Transverse colon (tissue), 4 donors: ENCODE measurements at regions of chr1 and their contacts with region 1.

Region 1: GRCh38 chr1:17551755-17552234 is 12.3 kb downstream of the ARHGEF10L start:
- DNase-seq: no peak
- H3K4me3 ChIP-seq: no peak overlapping the region
- H3K27ac ChIP-seq: peak overlapping the region; percentile 49 to 64 (median 58)
- H3K4me1 ChIP-seq: peaks cover 16 to 32% (median 26%) of the 10 kb centered on the region in 4 donors
- H3K27me3 ChIP-seq: no peaks in the 10 kb centered on the region
- CTCF ChIP-seq: no peak
- EP300 ChIP-seq: no peak
- POLR2A ChIP-seq: no peak

Region 2: GRCh38 chr1:17465228-17465627 is 86.6 kb before region 1 on chr1:
- in situ Hi-C with region 1: no loop called
- intact Hi-C with region 1: no loop called
- DNase-seq: no peak
- H3K4me3 ChIP-seq: no peak overlapping the region
- H3K27ac ChIP-seq: no peak overlapping the region
- H3K4me1 ChIP-seq: no peaks in the 10 kb centered on the region
- H3K27me3 ChIP-seq: peaks cover 22% of the 10 kb centered on the region
- CTCF ChIP-seq: no peak
- EP300 ChIP-seq: no peak
- POLR2A ChIP-seq: no peak

Region 3: GRCh38 chr1:17520071-17520813 is 31.6 kb before region 1 on chr1:
- in situ Hi-C with region 1: no loop called
- intact Hi-C with region 1: loop called (anchors 1 kb)
- DNase-seq: peak; percentile 90
- H3K4me3 ChIP-seq: peak overlapping the region in 3 of 4 donors; percentile 28 to 40 (median 30)
- H3K27ac ChIP-seq: peak overlapping the region; percentile 75 to 90 (median 86)
- H3K4me1 ChIP-seq: peaks cover 9 to 45% (median 34%) of the 10 kb centered on the region in 4 donors
- H3K27me3 ChIP-seq: no peaks in the 10 kb centered on the region
- CTCF ChIP-seq: peak in 2 of 5 experiments; percentile 21 to 29
- EP300 ChIP-seq: no peak
- POLR2A ChIP-seq: peak; percentile 87

Region 4: DNA sequence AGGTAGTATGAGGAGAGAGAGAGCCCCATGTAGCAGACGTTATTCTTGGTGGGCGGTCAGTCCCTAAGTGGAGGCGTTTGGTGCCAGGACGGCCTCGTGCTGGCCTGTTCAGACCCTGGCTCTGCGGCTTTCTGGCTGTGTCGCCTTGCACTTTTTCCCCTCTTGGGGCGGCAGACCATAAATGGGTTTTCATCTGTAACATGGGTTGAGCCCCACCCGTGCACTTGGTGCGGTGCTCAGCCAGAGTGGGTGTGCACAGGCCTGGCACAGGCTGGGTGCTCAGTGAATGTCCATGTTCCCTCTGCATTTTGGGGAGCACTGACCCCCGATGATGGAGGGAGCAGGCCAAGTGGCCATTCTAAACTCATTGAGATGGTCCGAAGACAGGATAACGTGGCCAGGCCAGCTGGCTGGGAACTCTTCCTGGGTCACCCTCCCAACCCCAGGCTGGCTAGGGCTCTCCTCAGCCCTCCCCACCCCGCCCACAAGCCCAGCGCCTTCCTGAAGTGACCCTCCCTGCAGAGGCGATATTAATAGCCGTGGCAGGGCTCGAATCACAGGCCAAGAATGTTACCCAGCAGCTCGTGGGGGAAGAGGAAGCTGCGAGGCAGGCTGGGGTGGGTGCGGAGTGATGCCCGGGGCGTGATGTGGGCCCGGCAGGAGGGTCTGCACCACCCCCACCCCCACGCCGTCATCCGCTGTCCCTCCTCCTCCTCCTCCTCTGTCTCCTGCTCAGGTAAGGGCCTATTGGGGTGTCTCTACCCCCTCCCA is 66.2 kb after region 1 on chr1:
- in situ Hi-C with region 1: no loop called
- intact Hi-C with region 1: no loop called
- DNase-seq: peak; percentile 31
- H3K4me3 ChIP-seq: peak overlapping the region in 2 of 4 donors; percentile 9 to 23
- H3K27ac ChIP-seq: peak overlapping the region; percentile 61 to 77 (median 68)
- H3K4me1 ChIP-seq: peaks cover 0 to 11% (median 6%) of the 10 kb centered on the region in 4 donors
- H3K27me3 ChIP-seq: no peaks in the 10 kb centered on the region
- CTCF ChIP-seq: no peak
- EP300 ChIP-seq: no peak
- POLR2A ChIP-seq: no peak